ENCODE measurements at regions of chr5 and their contacts with region 1.

Region 1: GRCh38 chr5:132260714-132261551 is 3.4 kb downstream of the PDLIM4 start:
- DNase-seq: no peak
- H3K4me3 ChIP-seq: no peak overlapping the region
- H3K27ac ChIP-seq: peak overlapping the region; percentile 88 to 91
- H3K4me1 ChIP-seq: peaks cover 23% of the 10 kb centered on the region
- H3K27me3 ChIP-seq: no peaks in the 10 kb centered on the region
- CTCF ChIP-seq: no peak
- POLR2A ChIP-seq: no peak

Region 2: DNA sequence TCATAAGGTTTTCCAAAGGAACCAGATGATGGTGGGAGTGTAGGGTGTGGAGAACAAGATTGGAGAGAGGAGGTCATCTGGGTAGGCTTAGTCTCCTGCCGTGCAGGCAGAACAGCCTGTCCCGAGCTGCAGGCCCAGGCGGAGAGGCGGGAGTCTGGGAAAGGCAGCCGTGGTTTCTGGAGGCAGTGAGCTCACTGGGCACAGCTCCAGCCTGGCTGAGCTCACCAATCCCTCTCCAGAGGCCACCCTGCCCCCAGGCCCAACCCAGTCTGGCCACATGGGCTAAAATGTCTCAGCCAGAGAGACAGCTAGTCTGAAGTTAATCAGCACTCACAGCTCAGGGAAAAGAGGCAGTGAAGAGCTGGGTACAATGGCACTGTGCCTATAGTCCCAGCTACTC is 45.6 kb before region 1 on chr5:
- intact Hi-C with region 1: loop called (anchors 5 kb)
- DNase-seq: peak; percentile 78
- H3K4me3 ChIP-seq: no peak overlapping the region
- H3K27ac ChIP-seq: peak overlapping the region; percentile 28 to 57
- H3K4me1 ChIP-seq: peaks cover 4% of the 10 kb centered on the region
- H3K27me3 ChIP-seq: no peaks in the 10 kb centered on the region
- CTCF ChIP-seq: no peak
- POLR2A ChIP-seq: peak; percentile 17

Measured in prostate gland (tissue), 2 donors.